SK-N-SH (cell line): ENCODE measurements at regions of chr1 and their contacts with region 1.

Region 1: DNA sequence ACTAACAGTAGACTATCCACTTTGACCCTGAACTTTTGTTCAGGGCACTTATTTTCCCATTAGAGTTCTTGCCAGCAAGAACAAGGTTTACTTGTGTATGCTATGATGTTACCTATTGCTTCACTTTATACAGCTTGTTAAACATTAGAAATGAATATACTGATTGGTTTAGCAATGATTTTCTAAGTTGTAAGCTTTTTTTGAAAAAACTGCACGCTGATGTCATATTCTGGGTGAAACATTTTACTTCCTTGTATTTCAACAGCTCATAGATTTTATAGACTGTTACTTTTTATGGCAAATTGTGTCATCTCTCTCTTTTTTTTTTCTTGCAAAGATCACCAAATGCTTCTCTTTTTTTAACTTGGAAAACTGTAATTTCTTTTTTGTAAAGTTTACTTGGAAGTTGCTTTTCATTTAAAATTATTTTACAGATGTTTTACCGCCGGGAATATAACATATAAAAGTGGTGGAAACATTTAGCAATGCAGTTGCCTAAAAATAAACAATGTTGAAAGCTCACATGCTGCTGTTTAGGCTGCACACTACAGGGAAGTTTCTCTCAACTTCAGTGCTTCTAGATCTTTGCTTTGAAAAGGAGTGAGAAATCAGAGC is 215.3 kb upstream of the NFIA start:
- DNase-seq: no peak
- H3K4me3 ChIP-seq: peak overlapping the region in 1 of 2 experiments; percentile 41; a peak in 3 of 4 replicates
- H3K27ac ChIP-seq: peak overlapping the region; percentile 16 to 99; a peak in 3 of 4 replicates
- H3K4me1 ChIP-seq: peaks cover 6 to 37% of the 10 kb centered on the region in 2 experiments; a peak in 3 of 4 replicates
- H3K27me3 ChIP-seq: no peaks in the 10 kb centered on the region
- CTCF ChIP-seq: no peak
- EP300 ChIP-seq: no peak
- RAD21 ChIP-seq: no peak

Region 2: DNA sequence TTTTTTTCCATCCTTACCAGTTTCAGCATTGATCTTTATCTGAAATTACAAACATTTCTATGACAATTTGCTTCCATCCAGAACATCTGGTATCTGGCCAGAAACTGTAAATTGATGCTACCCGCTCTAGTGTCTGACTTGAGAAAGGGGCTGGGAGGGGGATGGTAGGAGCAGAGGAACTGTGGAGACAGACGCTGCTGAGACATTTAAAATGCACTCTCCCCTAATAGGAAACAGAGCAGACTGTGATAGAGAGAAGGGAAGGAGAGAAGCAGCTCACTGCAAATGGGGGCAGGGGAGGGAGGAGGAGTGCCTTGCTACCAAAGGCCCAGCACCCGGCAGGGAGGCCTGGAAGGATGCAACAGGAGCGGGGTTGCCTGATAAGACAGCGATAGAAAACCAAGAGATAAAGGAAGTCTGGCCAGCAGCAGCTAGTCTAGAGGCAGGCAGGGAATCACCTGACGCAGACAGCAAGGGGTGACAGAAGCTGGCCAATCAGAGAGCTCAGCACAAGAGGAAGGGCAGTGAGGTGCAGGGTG is 19.8 kb after region 1 on chr1:
- CTCF ChIA-PET with region 1: interaction called, 7 read pairs
- POLR2A ChIA-PET with region 1: interaction called, 33 read pairs
- DNase-seq: peak; percentile 66
- H3K4me3 ChIP-seq: peak overlapping the region in 1 of 2 experiments; percentile 7; a peak in 2 of 4 replicates
- H3K27ac ChIP-seq: peak overlapping the region; percentile 68 to 100; a peak in 3 of 4 replicates
- H3K4me1 ChIP-seq: peaks cover 7 to 48% of the 10 kb centered on the region in 2 experiments; a peak in 2 of 4 replicates
- H3K27me3 ChIP-seq: no peaks in the 10 kb centered on the region
- CTCF ChIP-seq: no peak
- EP300 ChIP-seq: peak; percentile 28 to 91; a peak in 2 of 4 replicates
- RAD21 ChIP-seq: peak; percentile 47